ENCODE measurements at regions of chrX and their contacts with region 1.

Region 1: GRCh38 chrX:80578517-80579105 is 158.4 kb downstream of the TENT5D start:
- DNase-seq: no peak
- H3K4me3 ChIP-seq: no peak overlapping the region
- H3K27ac ChIP-seq: no peak overlapping the region
- H3K4me1 ChIP-seq: no peaks in the 10 kb centered on the region
- H3K27me3 ChIP-seq: no peaks in the 10 kb centered on the region
- CTCF ChIP-seq: peak; percentile 20

Region 2: GRCh38 chrX:80285131-80285773 is 293.4 kb before region 1 on chrX:
- intact Hi-C with region 1: loop called (anchors 10 kb)
- DNase-seq: peak; percentile 38
- H3K4me3 ChIP-seq: no peak overlapping the region
- H3K27ac ChIP-seq: no peak overlapping the region
- H3K4me1 ChIP-seq: no peaks in the 10 kb centered on the region
- H3K27me3 ChIP-seq: no peaks in the 10 kb centered on the region
- CTCF ChIP-seq: peak; percentile 53

Region 3: DNA sequence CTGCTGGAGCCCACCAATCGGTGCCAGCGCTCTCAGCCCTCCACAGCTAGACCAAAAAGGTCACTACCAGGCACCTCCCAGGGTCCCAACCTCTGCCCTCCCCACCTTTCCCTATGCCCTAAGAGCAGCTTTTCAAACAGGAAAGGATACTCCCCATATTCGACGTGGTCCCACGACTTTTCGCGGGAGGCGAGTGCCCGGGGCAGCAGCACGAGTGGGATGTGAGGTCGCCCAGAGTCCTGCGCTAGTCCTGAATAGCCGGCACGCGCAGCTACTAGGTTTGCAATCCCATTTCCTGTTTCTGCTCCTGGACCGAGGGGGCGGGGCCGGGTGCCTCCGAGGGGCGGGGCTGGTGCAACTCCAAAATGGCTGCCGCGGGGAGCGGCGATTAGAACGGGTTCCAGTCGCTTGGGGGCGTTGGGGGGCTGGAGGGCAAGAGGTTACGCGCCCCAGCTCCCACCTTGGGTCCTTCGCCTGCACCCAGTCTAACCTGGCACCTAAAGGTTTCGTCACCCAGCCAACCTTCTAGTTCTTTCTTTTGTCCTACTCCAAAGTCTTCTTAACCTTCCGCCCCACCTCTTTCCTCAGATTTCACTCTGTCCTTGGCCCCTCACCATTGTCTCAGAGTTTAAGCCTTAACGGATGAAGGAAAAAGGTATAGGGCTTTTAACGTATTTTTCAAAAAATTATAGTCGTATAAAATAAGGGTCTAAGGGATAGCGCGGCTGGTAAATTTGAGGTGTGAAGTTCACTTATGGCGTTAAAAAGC is 243.4 kb before region 1 on chrX:
- intact Hi-C with region 1: no loop called
- DNase-seq: peak; percentile 61
- H3K4me3 ChIP-seq: peak overlapping the region; percentile 26
- H3K27ac ChIP-seq: no peak overlapping the region
- H3K4me1 ChIP-seq: no peaks in the 10 kb centered on the region
- H3K27me3 ChIP-seq: no peaks in the 10 kb centered on the region
- CTCF ChIP-seq: no peak

Region 4: DNA sequence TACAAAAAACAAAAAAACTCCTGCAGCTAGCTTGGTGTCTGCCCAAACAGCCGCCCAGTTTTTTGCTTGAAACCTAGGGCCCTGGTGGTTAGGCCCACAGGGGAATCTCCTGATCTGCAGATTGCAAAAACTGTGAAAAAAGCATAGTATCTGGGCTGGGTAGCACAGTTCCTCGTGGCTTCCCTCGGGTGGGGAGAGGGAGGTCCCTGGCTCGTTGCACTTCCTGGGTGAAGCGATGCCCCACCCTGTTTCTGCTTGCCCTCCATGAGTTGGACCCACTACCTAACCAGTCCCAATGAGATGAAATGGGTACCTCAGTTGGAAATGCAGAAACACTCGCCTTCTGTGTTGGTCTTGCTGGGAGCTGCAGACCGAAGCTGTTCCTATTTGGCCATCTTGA is 249.6 kb after region 1 on chrX:
- intact Hi-C with region 1: no loop called
- DNase-seq: no peak
- H3K4me3 ChIP-seq: no peak overlapping the region
- H3K27ac ChIP-seq: no peak overlapping the region
- H3K4me1 ChIP-seq: no peaks in the 10 kb centered on the region
- H3K27me3 ChIP-seq: no peaks in the 10 kb centered on the region
- CTCF ChIP-seq: no peak